Activated naive CD4-positive, alpha-beta T cell treated with anti-CD3 and anti-CD28 coated beads for 36 hours (primary cell): ENCODE measurements at regions of chr3 and their contacts with region 1.

Region 1: GRCh38 chr3:120095226-120095978 is 1.2 kb upstream of the GSK3B start:
- DNase-seq: peak; percentile 92
- H3K4me3 Mint-ChIP-seq: no peak overlapping the region
- H3K27ac Mint-ChIP-seq: no peak overlapping the region
- H3K4me1 Mint-ChIP-seq: peaks cover 18% of the 10 kb centered on the region
- H3K27me3 Mint-ChIP-seq: no peaks in the 10 kb centered on the region

Region 2: DNA sequence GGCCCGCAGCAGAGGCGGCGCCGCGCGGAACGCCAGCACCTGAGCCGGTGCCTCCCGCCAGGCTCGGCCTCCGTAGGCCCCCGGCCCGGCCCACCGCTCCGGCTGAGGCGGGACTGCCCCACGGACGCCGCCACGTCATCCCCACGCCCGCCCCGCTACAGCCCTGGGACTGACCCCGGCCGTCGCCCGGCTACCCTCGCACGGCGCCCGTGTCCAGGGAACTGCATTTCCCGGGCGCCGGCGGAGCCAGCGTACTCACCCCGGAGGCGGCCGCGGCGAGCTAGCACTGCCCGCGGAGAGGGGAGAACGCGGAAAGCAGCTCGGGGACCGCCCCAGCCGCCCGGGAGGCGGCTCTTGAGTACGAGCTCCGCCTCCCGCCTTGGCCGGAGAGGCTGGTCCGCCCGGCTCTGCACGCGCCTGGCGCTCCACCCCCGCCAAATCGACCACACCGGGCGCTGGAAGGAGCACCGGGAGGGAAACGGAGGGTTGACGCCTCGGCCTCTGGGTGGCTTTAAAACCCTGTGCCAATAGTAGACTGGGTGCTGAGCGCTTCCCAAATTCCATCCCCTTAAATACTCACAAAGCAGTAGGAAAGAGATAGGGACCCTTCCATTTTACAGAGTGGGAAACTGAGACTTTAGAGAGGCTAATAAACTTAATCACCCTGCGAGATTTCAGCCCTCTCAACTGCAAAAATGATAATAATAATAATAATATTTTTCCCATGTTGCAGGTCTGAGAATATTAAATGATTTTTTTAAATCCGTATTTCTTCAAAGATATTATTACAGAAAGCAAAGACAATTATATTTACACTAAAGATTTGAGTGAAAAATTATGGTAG is 854.6 kb before region 1 on chr3 and contains the start of gene B4GALT4:
- CTCF ChIA-PET with region 1: no interaction called
- intact Hi-C with region 1: loop called (anchors 2 kb)
- DNase-seq: peak; percentile 70
- H3K4me3 Mint-ChIP-seq: peak within 1 kb of the TSS; percentile 88
- H3K27ac Mint-ChIP-seq: peak within 1 kb of the TSS; percentile 96
- H3K4me1 Mint-ChIP-seq: peaks cover 31% of the 10 kb centered on the region
- H3K27me3 Mint-ChIP-seq: no peaks in the 10 kb centered on the region
- total RNA-seq, gene B4GALT4: 22.0 to 22.8 TPM

Region 3: DNA sequence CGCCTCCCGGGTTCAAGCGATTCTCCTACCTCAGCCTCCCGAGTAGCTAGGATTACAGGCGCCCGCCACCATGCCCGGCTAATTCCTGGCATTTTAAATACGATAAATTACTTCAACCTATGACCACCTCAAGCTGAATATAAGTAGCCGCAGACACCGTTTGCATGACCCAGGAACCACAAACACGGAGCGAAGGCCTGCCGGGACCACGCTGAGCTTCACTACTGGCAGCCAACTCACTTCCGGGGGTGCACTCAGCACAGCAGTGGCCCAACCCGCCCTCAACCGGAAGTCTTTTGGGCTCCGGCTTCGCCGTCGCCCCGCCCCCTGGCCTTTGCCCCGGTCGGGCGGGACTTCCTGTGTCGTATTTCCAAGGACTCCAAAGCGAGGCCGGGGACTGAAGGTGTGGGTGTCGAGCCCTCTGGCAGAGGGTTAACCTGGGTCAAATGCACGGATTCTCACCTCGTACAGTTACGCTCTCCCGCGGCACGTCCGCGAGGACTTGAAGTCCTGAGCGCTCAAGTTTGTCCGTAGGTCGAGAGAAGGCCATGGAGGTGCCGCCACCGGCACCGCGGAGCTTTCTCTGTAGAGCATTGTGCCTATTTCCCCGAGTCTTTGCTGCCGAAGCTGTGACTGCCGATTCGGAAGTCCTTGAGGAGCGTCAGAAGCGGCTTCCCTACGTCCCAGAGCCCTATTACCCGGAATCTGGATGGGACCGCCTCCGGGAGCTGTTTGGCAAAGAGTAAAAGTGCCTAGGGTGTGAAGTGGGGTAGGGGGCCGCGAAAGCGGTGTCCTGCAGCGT is 597.0 kb before region 1 on chr3 and contains the start of gene TIMMDC1:
- CTCF ChIA-PET with region 1: interaction called, 5 read pairs
- intact Hi-C with region 1: loop called (anchors 1 kb)
- DNase-seq: peak; percentile 98
- H3K4me3 Mint-ChIP-seq: peak within 1 kb of the TSS; percentile 99
- H3K27ac Mint-ChIP-seq: peak within 1 kb of the TSS; percentile 94
- H3K4me1 Mint-ChIP-seq: peaks cover 37% of the 10 kb centered on the region
- H3K27me3 Mint-ChIP-seq: no peaks in the 10 kb centered on the region
- total RNA-seq, gene TIMMDC1: 75.6 to 83.8 TPM

Region 4: DNA sequence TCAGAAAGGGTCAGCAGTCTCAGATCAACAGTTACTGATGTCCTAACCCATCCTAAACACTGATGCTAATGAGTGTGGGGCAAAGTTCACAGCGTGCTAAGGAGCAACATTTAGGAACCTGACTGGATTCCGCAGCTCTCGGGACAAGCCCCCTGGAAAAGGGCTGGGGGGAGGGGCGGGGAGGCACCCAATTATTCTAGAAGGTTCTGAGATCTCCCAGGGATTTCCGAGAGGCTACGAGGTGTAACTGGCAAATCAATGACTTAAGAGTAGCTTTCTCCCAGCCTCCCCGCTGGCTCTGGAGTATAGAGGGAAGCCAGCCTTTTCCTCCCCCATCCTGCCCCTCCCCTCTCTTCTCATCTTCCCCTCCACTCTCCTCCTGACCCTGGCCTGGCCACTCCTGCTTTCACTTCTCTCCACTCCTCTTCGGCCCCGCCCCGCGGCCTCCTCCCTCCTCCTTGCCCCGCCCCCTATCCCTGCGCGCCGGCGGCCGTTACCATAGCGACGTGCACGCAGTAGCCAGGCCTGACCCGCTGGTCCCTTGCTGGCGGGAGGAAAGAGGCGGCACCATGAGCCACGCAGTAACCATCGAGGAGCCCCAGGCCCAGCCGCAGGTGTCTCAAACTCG is 392.8 kb before region 1 on chr3 and contains the start of gene CFAP91:
- CTCF ChIA-PET with region 1: no interaction called
- intact Hi-C with region 1: loop called (anchors 1 kb)
- DNase-seq: peak; percentile 83
- H3K4me3 Mint-ChIP-seq: peak within 1 kb of the TSS; percentile 72
- H3K27ac Mint-ChIP-seq: no peak within 1 kb of the TSS
- H3K4me1 Mint-ChIP-seq: peaks cover 45% of the 10 kb centered on the region
- H3K27me3 Mint-ChIP-seq: peaks cover 2% of the 10 kb centered on the region
- total RNA-seq, gene CFAP91: 0.26 to 0.57 TPM

Region 5: GRCh38 chr3:119944091-119944490 is 151.3 kb before region 1 on chr3:
- CTCF ChIA-PET with region 1: no interaction called
- intact Hi-C with region 1: loop called (anchors 2 kb)
- DNase-seq: no peak
- H3K4me3 Mint-ChIP-seq: no peak overlapping the region
- H3K27ac Mint-ChIP-seq: no peak overlapping the region
- H3K4me1 Mint-ChIP-seq: peaks cover 30% of the 10 kb centered on the region
- H3K27me3 Mint-ChIP-seq: no peaks in the 10 kb centered on the region

Region 6: DNA sequence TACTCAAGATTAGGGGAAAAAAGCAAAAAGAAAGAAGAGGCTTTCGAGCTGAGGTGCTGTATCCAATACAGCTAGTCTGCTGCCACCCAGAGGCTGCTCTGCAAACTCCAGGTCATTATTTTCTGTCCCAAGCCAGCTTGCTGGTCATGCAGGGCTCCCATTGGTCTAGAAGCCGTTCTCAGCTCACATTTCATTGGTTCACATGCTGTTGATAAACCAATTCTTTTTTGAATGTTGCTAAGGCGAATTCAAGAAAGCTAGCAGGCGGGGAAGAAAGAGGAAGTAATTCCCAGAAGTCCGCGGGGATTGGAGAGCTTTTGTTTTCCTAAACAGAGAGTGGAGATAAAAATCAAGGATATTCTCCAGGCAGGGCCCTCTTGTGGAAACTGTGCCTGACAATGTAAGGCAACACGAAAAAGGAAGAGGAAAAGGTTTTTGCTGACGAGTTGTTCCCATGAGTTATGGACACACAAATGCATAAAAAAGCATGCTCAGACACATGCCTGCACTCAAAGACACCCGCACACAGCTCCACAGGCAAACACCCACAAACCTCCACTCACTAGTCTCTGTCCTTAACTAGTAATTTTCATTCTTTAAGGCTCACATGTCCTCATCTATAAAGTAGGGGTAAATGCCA is 322.0 kb after region 1 on chr3:
- CTCF ChIA-PET with region 1: no interaction called
- intact Hi-C with region 1: loop called (anchors 2 kb)
- DNase-seq: peak; percentile 96
- H3K4me3 Mint-ChIP-seq: peak overlapping the region; percentile 74
- H3K27ac Mint-ChIP-seq: peak overlapping the region; percentile 32
- H3K4me1 Mint-ChIP-seq: peaks cover 8% of the 10 kb centered on the region
- H3K27me3 Mint-ChIP-seq: no peaks in the 10 kb centered on the region

Region 7: DNA sequence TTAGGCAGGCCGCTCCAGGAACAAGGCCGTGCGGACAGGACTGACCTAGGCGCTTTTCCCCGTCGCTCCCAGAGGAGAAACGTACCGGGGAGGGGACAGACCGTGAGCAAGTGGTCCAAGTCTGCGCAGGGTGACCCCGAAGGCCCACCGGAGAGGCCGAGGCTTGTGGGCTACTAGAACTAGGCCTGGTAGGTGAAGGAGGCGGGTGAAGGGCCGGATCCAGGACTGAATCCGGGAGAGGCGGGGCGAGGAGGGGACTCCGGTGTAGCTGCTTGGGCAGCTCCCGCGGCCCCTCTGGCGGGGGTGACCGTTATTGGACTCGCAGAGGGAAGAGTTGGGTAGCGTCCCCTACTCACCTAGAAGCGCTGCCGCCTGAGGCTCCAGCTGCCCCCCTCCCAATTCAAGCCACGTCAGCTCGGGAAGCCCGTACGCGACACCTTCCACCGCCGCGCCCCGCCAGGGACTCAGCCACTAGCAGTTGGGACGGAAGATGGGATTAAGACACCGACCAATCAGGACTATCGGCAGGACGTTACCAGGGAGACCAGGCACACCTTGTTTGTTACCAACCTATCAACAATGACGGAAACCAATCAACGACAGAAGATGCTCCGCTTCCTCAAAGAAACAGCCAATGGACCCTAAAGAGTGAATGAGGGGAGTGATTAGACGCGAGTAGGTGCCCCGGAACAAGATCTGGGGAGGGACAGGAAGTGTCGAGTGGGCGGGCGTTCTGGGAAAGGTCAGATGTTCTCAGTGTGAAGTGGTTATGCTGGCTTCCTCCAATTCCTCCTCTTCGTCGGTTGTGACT is 1654.1 kb after region 1 on chr3 and contains the start of gene GOLGB1:
- CTCF ChIA-PET with region 1: no interaction called
- intact Hi-C with region 1: loop called (anchors 1 kb)
- DNase-seq: peak; percentile 97
- H3K4me3 Mint-ChIP-seq: no peak within 1 kb of the TSS
- H3K27ac Mint-ChIP-seq: no peak within 1 kb of the TSS
- H3K4me1 Mint-ChIP-seq: peaks cover 5% of the 10 kb centered on the region
- H3K27me3 Mint-ChIP-seq: no peaks in the 10 kb centered on the region
- total RNA-seq, gene GOLGB1: 18.2 to 19.7 TPM